Left lung (tissue), 14 donors: ENCODE measurements at regions of chr17 and their contacts with region 1.

Region 1: GRCh38 chr17:38982858-38983746 is 15.9 kb upstream of the FBXO47 start:
- DNase-seq: peak in 2 of 4 donors; percentile 56 to 77
- ATAC-seq: peak; percentile 88
- H3K4me3 ChIP-seq: no peak overlapping the region
- H3K27ac ChIP-seq: peak overlapping the region in 1 of 2 donors; percentile 45
- H3K4me1 ChIP-seq: peaks cover 0 to 3% of the 10 kb centered on the region in 2 donors
- H3K27me3 ChIP-seq: no peaks in the 10 kb centered on the region
- CTCF ChIP-seq: peak; percentile 68 to 73

Region 2: GRCh38 chr17:39036014-39036413 is 52.9 kb after region 1 on chr17:
- intact Hi-C with region 1: no loop called
- DNase-seq: no peak
- ATAC-seq: no peak
- H3K4me3 ChIP-seq: no peak overlapping the region
- H3K27ac ChIP-seq: no peak overlapping the region
- H3K4me1 ChIP-seq: no peaks in the 10 kb centered on the region
- H3K27me3 ChIP-seq: no peaks in the 10 kb centered on the region
- CTCF ChIP-seq: no peak

Region 3: GRCh38 chr17:39153599-39154051 is 170.5 kb after region 1 on chr17:
- intact Hi-C with region 1: loop called in 1 of 2 experiments (anchors 5 kb)
- DNase-seq: peak; percentile 91 to 96 (median 94)
- ATAC-seq: peak; percentile 80
- H3K4me3 ChIP-seq: peak overlapping the region; percentile 76 to 93
- H3K27ac ChIP-seq: peak overlapping the region; percentile 85 to 90
- H3K4me1 ChIP-seq: peaks cover 4 to 24% of the 10 kb centered on the region in 2 donors
- H3K27me3 ChIP-seq: peaks cover 9 to 40% of the 10 kb centered on the region in 2 donors
- CTCF ChIP-seq: no peak

Region 4: DNA sequence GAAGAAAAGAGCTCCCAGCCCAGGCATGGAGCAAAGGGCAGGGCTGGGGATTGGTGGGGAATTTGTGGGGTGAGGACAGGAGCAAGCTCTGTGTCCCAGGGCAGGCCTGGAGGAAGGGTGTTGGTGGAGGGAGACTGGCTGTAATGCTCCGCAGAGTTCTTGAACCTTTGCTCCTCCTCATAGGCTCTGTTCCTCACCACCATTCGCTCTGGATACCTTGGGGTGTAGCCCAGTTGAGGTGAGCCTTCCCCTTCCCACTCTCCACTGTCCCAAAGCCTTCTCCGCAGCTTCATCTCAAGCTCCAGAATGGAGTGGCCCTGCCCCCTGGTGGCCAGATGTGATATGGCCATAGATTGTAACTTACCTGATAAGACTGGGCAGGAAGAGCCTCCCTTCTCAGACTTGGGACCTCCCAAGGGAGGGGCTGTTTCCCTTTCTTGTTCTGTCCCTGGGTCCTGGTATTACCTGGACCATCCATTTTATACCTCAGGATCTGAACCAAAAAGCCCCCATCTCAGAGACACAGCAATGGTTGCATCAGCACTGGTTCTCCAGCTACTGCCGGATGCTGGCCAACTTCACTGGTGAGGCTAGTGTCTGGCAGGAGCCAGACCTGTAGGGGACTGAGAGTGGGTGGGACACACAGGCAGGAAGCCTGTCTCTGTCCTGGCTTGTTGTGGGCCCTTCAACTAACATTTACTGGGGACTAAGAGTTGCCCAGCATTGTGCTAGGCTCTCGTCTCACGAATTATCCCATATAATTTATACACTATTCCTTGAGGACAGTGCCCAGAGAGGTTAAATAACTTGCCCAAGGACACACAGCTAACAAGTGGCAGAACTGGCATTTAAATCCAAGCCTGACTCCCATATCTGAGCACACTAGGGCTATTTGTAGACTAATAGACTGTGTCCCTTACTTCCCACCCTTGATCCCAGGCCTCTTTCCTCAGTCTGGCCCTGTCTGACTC is 261.8 kb after region 1 on chr17:
- intact Hi-C with region 1: loop called in 1 of 2 experiments (anchors 5 kb)
- DNase-seq: peak; percentile 74 to 91 (median 84)
- ATAC-seq: peak; percentile 96
- H3K4me3 ChIP-seq: no peak overlapping the region
- H3K27ac ChIP-seq: no peak overlapping the region
- H3K4me1 ChIP-seq: peaks cover 2 to 10% of the 10 kb centered on the region in 2 donors
- H3K27me3 ChIP-seq: peaks cover 0 to 40% of the 10 kb centered on the region in 2 donors
- CTCF ChIP-seq: peak; percentile 93 to 95